Naive thymus-derived CD8-positive, alpha-beta T cell (primary cell): ENCODE measurements at regions of chr4 and their contacts with region 1.

Region 1: DNA sequence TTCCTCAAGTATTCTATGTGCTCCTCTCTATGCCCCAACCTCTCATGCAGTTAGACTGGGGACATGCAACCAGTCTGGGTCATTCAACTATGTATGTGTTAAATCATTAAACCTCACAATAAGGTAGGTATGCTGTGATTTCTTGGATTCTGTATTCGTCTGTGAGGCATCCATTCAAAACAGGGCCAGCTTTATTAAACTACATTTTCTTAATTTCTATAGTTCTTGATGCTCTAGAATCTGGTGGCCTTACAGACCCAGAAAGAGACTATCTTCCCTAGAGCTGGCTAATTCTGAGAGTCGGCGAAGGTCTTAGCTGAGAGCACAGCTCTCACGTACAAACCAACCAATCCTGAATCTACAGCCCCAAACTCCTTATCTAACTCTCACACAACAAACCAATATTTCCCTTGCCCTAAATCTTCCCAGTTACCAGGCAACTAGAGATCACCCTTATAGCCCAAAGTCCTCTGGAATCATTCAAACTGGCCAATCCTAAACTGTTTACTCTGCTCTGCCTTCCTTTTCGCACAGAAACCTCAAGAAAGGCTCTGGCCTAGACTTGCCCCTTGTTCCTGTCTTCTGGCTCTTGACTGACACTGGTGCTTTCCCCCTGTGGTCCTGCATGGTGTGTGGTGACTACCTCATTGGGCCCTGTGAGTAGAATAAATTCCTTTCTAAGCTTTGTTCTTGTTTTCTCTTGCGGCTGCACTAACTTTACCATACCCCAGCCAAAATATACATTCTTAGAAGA is 203.5 kb upstream of the TET2 start:
- DNase-seq: peak in 9 of 10 donors; percentile 26 to 86 (median 70)
- ATAC-seq: peak; percentile 94
- H3K4me3 Mint-ChIP-seq: peak overlapping the region in 9 of 10 donors; percentile 1 to 59 (median 25)
- H3K27ac Mint-ChIP-seq: peak overlapping the region; percentile 43 to 93 (median 90)
- H3K4me1 Mint-ChIP-seq: peaks cover 18 to 49% (median 42%) of the 10 kb centered on the region in 4 donors
- H3K27me3 Mint-ChIP-seq: no peaks in the 10 kb centered on the region

Region 2: DNA sequence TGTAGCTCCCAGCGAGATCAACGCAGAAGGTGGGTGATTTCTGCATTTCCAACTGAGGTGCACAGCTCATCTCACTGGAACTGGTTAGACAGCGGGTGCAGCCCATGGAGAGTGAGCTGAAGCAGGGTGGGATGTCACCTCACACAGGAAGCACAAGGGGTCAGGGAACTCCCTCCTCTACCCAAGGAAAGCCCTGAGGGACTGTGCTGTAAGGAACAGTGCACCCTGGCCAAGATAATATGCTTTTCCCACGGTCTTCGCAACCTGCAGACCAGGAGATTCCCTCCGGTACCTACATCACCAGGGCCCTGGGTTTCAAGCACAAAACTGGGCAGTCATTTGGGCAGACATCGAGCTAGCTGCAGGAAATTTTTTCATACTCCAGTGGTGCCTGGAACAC is 12.9 kb before region 1 on chr4:
- POLR2A ChIA-PET with region 1: interaction called, 10 read pairs
- DNase-seq: no peak
- ATAC-seq: peak; percentile 32 to 40
- H3K4me3 Mint-ChIP-seq: peak overlapping the region in 7 of 10 donors; percentile 19 to 80 (median 70)
- H3K27ac Mint-ChIP-seq: peak overlapping the region; percentile 60 to 95 (median 90)
- H3K4me1 Mint-ChIP-seq: peaks cover 28 to 54% (median 52%) of the 10 kb centered on the region in 4 donors
- H3K27me3 Mint-ChIP-seq: no peaks in the 10 kb centered on the region